Naive thymus-derived CD4-positive, alpha-beta T cell (primary cell): ENCODE measurements at regions of chr7 and their contacts with region 1.

Region 1: DNA sequence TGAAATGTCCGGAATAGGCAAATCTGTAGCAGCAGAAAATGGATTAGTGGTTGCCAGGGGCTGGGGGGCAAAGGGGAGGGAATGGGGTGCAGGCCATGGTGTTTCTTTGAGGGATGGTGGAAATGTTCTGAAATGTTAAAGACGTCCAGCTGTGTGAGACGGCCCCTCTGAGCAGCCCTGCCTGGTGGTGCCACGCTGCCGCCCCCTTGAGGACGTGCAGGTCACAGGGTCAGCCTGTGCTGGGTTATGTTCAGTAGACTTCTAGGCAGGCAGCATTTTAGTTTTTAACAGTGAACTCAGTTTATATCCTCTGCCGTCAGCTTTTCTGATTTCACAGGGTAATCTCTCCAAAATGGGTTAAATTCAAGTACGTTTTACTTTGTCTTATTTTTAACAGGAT is 9.4 kb downstream of the NUB1 start:
- DNase-seq: peak in 2 of 9 donors; percentile 7 to 45
- ATAC-seq: no peak
- H3K4me3 ChIP-seq: no peak overlapping the region
- H3K4me3 Mint-ChIP-seq: peak overlapping the region; percentile 56 to 86 (median 72)
- H3K27ac ChIP-seq: peak overlapping the region; percentile 89
- H3K27ac Mint-ChIP-seq: peak overlapping the region; percentile 74 to 100 (median 93)
- H3K4me1 ChIP-seq: peaks cover 28 to 35% of the 10 kb centered on the region in 2 donors
- H3K4me1 Mint-ChIP-seq: peaks cover 19 to 74% (median 69%) of the 10 kb centered on the region in 7 donors
- H3K27me3 ChIP-seq: no peaks in the 10 kb centered on the region
- H3K27me3 Mint-ChIP-seq: no peaks in the 10 kb centered on the region

Region 2: DNA sequence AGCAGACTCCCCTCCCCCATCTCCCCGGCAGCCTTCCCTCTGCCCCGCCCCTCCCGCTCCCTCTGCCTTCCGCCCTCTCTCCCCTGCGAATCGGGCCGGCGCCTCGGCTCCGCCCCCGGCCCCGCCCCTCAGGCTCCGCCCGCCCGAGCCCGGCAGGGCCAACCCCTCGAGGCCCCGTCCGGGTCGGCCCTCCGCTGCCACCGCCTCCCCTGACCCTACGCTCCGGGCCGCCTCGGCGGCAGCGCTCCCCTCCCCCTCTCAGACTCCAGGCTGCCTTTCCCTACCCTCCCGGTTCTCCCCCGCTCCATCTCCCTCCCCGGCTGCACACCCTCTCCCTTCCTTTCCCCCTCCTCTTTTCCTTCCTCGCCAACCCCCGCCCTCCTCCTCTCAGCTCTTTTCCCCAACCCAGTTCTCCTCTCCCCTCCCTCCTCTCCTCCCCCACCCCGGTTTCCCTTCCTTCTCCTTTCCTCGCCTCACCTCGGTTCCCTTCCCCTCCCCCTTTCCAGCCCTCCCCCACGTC is 1579.2 kb before region 1 on chr7:
- CTCF ChIA-PET with region 1: no interaction called
- POLR2A ChIA-PET with region 1: no interaction called
- intact Hi-C with region 1: loop called in 1 of 2 experiments (anchors 5 kb)
- DNase-seq: peak; percentile 74 to 89 (median 85)
- ATAC-seq: peak; percentile 94
- H3K4me3 ChIP-seq: peak overlapping the region; percentile 72
- H3K4me3 Mint-ChIP-seq: peak overlapping the region; percentile 16 to 88 (median 78)
- H3K27ac ChIP-seq: peak overlapping the region; percentile 71
- H3K27ac Mint-ChIP-seq: peak overlapping the region in 6 of 9 donors; percentile 10 to 70 (median 42)
- H3K4me1 ChIP-seq: peaks cover 5 to 8% of the 10 kb centered on the region in 2 donors
- H3K4me1 Mint-ChIP-seq: peaks cover 2 to 29% (median 21%) of the 10 kb centered on the region in 7 donors
- H3K27me3 ChIP-seq: no peaks in the 10 kb centered on the region
- H3K27me3 Mint-ChIP-seq: peaks cover 0 to 46% (median 0%) of the 10 kb centered on the region in 5 donors

Region 3: DNA sequence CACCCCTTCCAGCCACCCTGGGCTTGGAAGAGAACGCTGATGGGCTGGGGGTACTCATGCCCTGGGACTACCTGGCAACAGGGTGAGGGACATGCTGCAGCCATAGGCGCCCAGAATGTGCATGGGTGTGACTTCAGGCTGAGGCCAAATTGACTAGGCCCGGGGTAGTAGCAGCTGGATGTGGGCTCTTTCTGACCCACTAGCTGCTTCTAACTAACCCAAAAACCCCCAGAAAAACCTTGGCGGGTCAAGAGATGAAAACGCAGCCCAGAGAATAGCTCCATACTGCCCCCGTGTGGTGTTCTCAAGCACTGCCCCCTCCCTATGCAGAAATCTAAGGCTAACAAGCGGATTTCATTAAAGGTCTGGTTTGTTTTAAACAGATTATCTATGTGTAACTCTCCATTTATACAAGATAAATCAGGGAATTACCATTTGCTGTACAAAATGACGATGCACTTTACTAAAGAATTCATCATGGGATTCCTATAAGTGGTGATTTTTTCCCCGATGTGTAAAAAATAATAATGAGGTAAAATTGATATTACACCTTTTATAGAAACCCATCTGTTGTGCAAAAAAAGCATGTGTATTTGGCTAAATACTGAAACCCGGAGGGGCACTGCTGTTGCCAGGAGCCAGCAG is 106.7 kb before region 1 on chr7:
- CTCF ChIA-PET with region 1: no interaction called
- POLR2A ChIA-PET with region 1: interaction called, 3 read pairs
- intact Hi-C with region 1: loop called (anchors 2 kb)
- DNase-seq: peak in 6 of 9 donors; percentile 44 to 63 (median 54)
- ATAC-seq: peak; percentile 52
- H3K4me3 ChIP-seq: peak overlapping the region; percentile 40
- H3K4me3 Mint-ChIP-seq: peak overlapping the region; percentile 71 to 93 (median 78)
- H3K27ac ChIP-seq: no peak overlapping the region
- H3K27ac Mint-ChIP-seq: peak overlapping the region in 6 of 9 donors; percentile 9 to 90 (median 68)
- H3K4me1 ChIP-seq: peaks cover 22 to 36% of the 10 kb centered on the region in 2 donors
- H3K4me1 Mint-ChIP-seq: peaks cover 27 to 53% (median 38%) of the 10 kb centered on the region in 7 donors
- H3K27me3 ChIP-seq: peaks cover 0 to under 1% of the 10 kb centered on the region in 2 donors
- H3K27me3 Mint-ChIP-seq: peaks cover 3 to 37% (median 21%) of the 10 kb centered on the region in 5 donors

Region 4: DNA sequence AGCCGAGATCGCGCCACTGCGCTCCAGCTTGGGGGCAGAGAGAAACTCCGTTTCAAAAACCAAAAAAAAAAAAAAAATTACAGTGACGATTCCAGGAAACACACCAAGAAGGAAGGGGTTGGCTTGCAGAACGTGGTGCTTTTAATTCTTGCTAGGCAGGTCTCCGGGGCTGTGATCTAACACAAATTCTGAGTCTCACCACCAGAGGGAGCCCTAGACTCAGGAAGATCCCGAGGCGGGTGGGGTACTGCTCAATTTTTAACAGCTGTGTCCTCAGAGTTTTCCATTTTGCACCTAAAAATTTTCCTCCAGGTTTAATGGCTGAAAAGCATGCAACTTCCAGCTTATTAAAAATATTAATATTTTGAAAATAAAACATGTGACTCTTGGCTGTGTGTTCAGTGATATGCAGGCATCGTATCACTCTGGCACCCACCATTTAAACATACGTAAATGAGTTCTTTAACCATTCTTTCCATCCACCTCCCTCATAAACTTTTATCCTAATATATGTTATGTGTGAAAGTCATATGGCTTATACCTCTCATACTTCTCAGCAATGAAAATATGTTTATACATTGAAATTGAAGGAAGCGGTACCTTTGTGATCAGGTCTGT is 35.9 kb before region 1 on chr7:
- CTCF ChIA-PET with region 1: interaction called, 74 read pairs
- POLR2A ChIA-PET with region 1: interaction called, 21 read pairs
- intact Hi-C with region 1: loop called (anchors 1 kb)
- DNase-seq: peak; percentile 48 to 87 (median 82)
- ATAC-seq: peak; percentile 96
- H3K4me3 ChIP-seq: no peak overlapping the region
- H3K4me3 Mint-ChIP-seq: peak overlapping the region in 8 of 10 donors; percentile 1 to 80 (median 56)
- H3K27ac ChIP-seq: no peak overlapping the region
- H3K27ac Mint-ChIP-seq: peak overlapping the region in 6 of 9 donors; percentile 33 to 81 (median 58)
- H3K4me1 ChIP-seq: no peaks in the 10 kb centered on the region
- H3K4me1 Mint-ChIP-seq: peaks cover 0 to 11% (median 5%) of the 10 kb centered on the region in 7 donors
- H3K27me3 ChIP-seq: no peaks in the 10 kb centered on the region
- H3K27me3 Mint-ChIP-seq: no peaks in the 10 kb centered on the region

Region 5: GRCh38 chr7:151432791-151433521 is 81.9 kb after region 1 on chr7:
- CTCF ChIA-PET with region 1: interaction called, 3 read pairs
- POLR2A ChIA-PET with region 1: interaction called, 3 read pairs
- intact Hi-C with region 1: loop called in 1 of 2 experiments (anchors 5 kb)
- DNase-seq: peak in 7 of 9 donors; percentile 29 to 55 (median 53)
- ATAC-seq: peak; percentile 69
- H3K4me3 ChIP-seq: no peak overlapping the region
- H3K4me3 Mint-ChIP-seq: peak overlapping the region; percentile 8 to 79 (median 62)
- H3K27ac ChIP-seq: peak overlapping the region; percentile 25
- H3K27ac Mint-ChIP-seq: peak overlapping the region; percentile 54 to 90 (median 81)
- H3K4me1 ChIP-seq: peaks cover 51 to 62% of the 10 kb centered on the region in 2 donors
- H3K4me1 Mint-ChIP-seq: peaks cover 25 to 72% (median 52%) of the 10 kb centered on the region in 7 donors
- H3K27me3 ChIP-seq: no peaks in the 10 kb centered on the region
- H3K27me3 Mint-ChIP-seq: no peaks in the 10 kb centered on the region

Region 6: GRCh38 chr7:151631968-151632749 is 281.1 kb after region 1 on chr7:
- CTCF ChIA-PET with region 1: interaction called, 3 read pairs
- POLR2A ChIA-PET with region 1: no interaction called
- intact Hi-C with region 1: loop called in 1 of 2 experiments (anchors 5 kb)
- DNase-seq: peak; percentile 81 to 95 (median 87)
- ATAC-seq: peak; percentile 93
- H3K4me3 ChIP-seq: peak overlapping the region; percentile 80
- H3K4me3 Mint-ChIP-seq: peak overlapping the region; percentile 89 to 99 (median 96)
- H3K27ac ChIP-seq: peak overlapping the region; percentile 81
- H3K27ac Mint-ChIP-seq: peak overlapping the region; percentile 90 to 97 (median 95)
- H3K4me1 ChIP-seq: peaks cover 12% of the 10 kb centered on the region in 2 donors
- H3K4me1 Mint-ChIP-seq: peaks cover 14 to 48% (median 30%) of the 10 kb centered on the region in 7 donors
- H3K27me3 ChIP-seq: no peaks in the 10 kb centered on the region
- H3K27me3 Mint-ChIP-seq: no peaks in the 10 kb centered on the region